ENCODE measurements at regions of chr9 and their contacts with region 1.

Region 1: DNA sequence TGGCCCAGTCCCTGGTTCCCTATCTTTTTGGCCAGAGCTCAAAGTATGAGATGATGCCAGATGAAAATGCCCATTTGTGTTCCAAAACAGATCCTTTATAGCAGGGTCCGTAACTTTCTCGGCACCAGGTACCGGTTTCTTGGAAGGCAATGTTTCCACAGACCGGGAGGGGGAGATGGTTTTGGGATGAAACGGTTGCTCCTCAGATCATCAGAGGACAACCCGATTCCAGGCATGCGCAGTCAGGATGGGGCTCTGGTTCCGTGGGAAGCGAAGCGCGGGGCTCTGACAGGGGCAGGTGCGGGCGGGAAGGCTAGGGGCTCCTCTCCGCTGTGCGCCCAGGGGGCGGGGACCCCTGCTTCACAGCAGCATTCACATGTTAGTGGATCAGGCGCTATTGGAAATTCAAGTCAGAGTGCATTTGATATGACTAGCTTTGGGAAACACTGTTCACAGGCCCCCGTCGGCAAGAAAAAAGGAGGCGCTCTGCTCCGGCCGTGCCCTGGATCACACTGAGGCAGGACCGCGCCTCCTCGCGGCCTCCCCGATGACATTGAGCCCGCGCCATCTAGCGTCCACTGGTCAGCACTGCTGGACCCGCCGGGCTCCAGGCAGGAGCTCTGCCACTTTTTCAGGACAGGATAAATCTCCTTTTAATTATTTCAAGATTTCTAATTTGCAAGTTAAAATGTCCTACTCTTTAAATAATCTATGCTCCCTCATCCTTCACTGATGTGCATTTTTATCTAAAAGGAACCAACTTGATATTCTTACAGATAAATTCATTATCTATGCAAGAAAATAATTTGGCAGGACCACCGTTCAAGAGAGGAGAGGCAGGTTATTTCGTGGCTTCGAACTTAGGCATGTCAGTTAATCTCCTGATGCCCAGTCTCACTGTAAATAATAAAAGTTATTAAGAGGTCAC is 190.0 kb downstream of the FANCC start:
- DNase-seq: peak; percentile 44 to 62 (median 61)
- H3K4me3 ChIP-seq: no peak overlapping the region
- H3K4me3 Mint-ChIP-seq: peak overlapping the region; percentile 45 to 72
- H3K27ac ChIP-seq: no peak overlapping the region
- H3K27ac Mint-ChIP-seq: no peak overlapping the region
- H3K4me1 ChIP-seq: peaks cover 4% of the 10 kb centered on the region in 2 donors
- H3K4me1 Mint-ChIP-seq: peaks cover 3% of the 10 kb centered on the region
- H3K27me3 ChIP-seq: no peaks in the 10 kb centered on the region
- H3K27me3 Mint-ChIP-seq: peaks cover 0 to 1% (median 1%) of the 10 kb centered on the region in 3 donors
- CTCF ChIP-seq: peak; percentile 98

Region 2: DNA sequence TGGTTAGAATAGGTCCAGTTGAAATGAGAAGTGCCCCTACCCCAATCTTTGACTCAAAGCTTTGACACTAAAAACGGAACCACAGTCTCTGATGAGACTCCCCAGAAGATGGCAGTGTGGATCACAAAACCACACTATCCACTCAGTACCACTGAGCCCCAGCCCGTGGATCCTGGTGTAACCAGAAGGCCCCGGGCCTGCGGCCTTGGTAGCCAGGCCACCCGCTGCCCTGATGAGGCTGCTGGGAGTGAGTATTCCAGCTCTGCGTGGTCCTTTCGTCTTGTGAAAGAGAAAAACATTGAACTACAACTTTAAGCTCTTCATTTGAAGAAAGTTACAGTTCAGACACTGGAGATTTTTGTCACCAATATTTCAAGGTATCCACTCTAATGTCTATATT is 446.0 kb before region 1 on chr9:
- intact Hi-C with region 1: loop called (anchors 2 to 5 kb)
- DNase-seq: peak; percentile 52 to 74 (median 68)
- H3K4me3 ChIP-seq: no peak overlapping the region
- H3K4me3 Mint-ChIP-seq: no peak overlapping the region
- H3K27ac ChIP-seq: no peak overlapping the region
- H3K27ac Mint-ChIP-seq: peak overlapping the region in 1 of 7 donors; percentile 35
- H3K4me1 ChIP-seq: no peaks in the 10 kb centered on the region
- H3K4me1 Mint-ChIP-seq: no peaks in the 10 kb centered on the region
- H3K27me3 ChIP-seq: peaks cover 2% of the 10 kb centered on the region in 2 donors
- H3K27me3 Mint-ChIP-seq: peaks cover 0 to 10% (median 3%) of the 10 kb centered on the region in 3 donors
- CTCF ChIP-seq: peak; percentile 75

Region 3: GRCh38 chr9:95826183-95826838 is 698.8 kb after region 1 on chr9:
- intact Hi-C with region 1: no loop called
- DNase-seq: no peak
- H3K4me3 ChIP-seq: no peak overlapping the region
- H3K4me3 Mint-ChIP-seq: no peak overlapping the region
- H3K27ac ChIP-seq: no peak overlapping the region
- H3K27ac Mint-ChIP-seq: no peak overlapping the region
- H3K4me1 ChIP-seq: no peaks in the 10 kb centered on the region
- H3K4me1 Mint-ChIP-seq: no peaks in the 10 kb centered on the region
- H3K27me3 ChIP-seq: no peaks in the 10 kb centered on the region
- H3K27me3 Mint-ChIP-seq: peaks cover 0 to 1% (median 0%) of the 10 kb centered on the region in 3 donors
- CTCF ChIP-seq: no peak

Measured in CD14-positive monocyte (primary cell).